Sigmoid colon (tissue), 7 donors: ENCODE measurements at regions of chr20 and their contacts with region 1.

Region 1: GRCh38 chr20:63980806-63981728 is at the start of gene PRPF6:
- DNase-seq: peak; percentile 97
- H3K4me3 ChIP-seq: peak within 1 kb of the TSS; percentile 85 to 98 (median 90)
- H3K27ac ChIP-seq: peak within 1 kb of the TSS; percentile 80 to 88 (median 85)
- H3K4me1 ChIP-seq: peaks cover 0 to 45% (median 42%) of the 10 kb centered on the region in 4 donors
- H3K27me3 ChIP-seq: peaks cover 0 to 12% (median 7%) of the 10 kb centered on the region in 3 donors
- CTCF ChIP-seq: peak; percentile 69 to 81 (median 78)
- EP300 ChIP-seq: peak in 1 of 4 donors; percentile 43
- POLR2A ChIP-seq: peak; percentile 70 to 72
- total RNA-seq, gene PRPF6: 42.3 to 52.1 (median 46.9) TPM

Region 2: GRCh38 chr20:64062596-64063388 is 81.7 kb after region 1 on chr20 and contains the start of gene TCEA2:
- intact Hi-C with region 1: loop called (anchors 1 kb)
- DNase-seq: peak; percentile 98
- H3K4me3 ChIP-seq: peak within 1 kb of the TSS; percentile 72 to 95 (median 89)
- H3K27ac ChIP-seq: peak within 1 kb of the TSS; percentile 77 to 91 (median 88)
- H3K4me1 ChIP-seq: peaks cover 0 to 31% (median 25%) of the 10 kb centered on the region in 4 donors
- H3K27me3 ChIP-seq: no peaks in the 10 kb centered on the region
- CTCF ChIP-seq: no peak
- EP300 ChIP-seq: no peak
- POLR2A ChIP-seq: peak; percentile 72 to 82
- total RNA-seq, gene TCEA2: 41.7 to 50.5 (median 42.2) TPM